Endothelial cell of umbilical vein (primary cell): ENCODE measurements at regions of chr17 and their contacts with region 1.

Region 1: DNA sequence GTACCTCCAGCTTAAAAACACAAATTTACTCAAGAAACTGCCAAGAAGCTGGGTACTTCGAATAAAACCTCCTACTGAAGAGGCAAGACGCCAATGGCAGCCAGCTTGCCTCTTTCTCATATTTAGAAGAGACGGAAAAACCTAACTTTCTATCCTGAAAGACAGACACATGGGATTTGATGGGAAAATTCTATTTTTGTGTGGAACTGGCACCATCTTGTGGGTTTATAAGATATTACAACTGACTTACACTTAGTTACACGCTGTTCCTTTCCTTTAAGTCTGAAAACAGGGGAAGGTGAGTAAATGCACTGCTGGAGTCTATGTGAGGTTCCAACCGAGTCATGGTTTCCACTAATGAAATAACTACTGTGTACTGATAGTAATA is 10.3 kb downstream of the ZNF18 start:
- DNase-seq: peak; percentile 72
- H3K4me3 ChIP-seq: no peak overlapping the region
- H3K27ac ChIP-seq: no peak overlapping the region
- H3K4me1 ChIP-seq: no peaks in the 10 kb centered on the region
- H3K27me3 ChIP-seq: no peaks in the 10 kb centered on the region
- CTCF ChIP-seq: peak; percentile 30 to 35
- POLR2A ChIP-seq: no peak

Region 2: GRCh38 chr17:10729334-10730193 is 1257.4 kb before region 1 on chr17 and contains the start of gene TMEM220:
- CTCF ChIA-PET with region 1: no interaction called
- POLR2A ChIA-PET with region 1: no interaction called
- dilution Hi-C with region 1: no loop called
- intact Hi-C with region 1: loop called (anchors 10 kb)
- DNase-seq: peak; percentile 80
- H3K4me3 ChIP-seq: peak within 1 kb of the TSS; percentile 63 to 74 (median 68)
- H3K27ac ChIP-seq: peak within 1 kb of the TSS; percentile 59
- H3K4me1 ChIP-seq: peaks cover 6% of the 10 kb centered on the region
- H3K27me3 ChIP-seq: peaks cover 0 to 1% of the 10 kb centered on the region in 2 experiments
- CTCF ChIP-seq: no peak
- POLR2A ChIP-seq: no peak
- total RNA-seq, gene TMEM220: 10.4 and 11.2 TPM in 2 replicates

Region 3: GRCh38 chr17:10737168-10737622 is 1249.7 kb before region 1 on chr17:
- CTCF ChIA-PET with region 1: interaction called, 13 read pairs
- POLR2A ChIA-PET with region 1: no interaction called
- dilution Hi-C with region 1: no loop called
- intact Hi-C with region 1: loop called (anchors 10 kb)
- DNase-seq: peak; percentile 45
- H3K4me3 ChIP-seq: no peak overlapping the region
- H3K27ac ChIP-seq: no peak overlapping the region
- H3K4me1 ChIP-seq: no peaks in the 10 kb centered on the region
- H3K27me3 ChIP-seq: peaks cover 0 to 3% of the 10 kb centered on the region in 2 experiments
- CTCF ChIP-seq: peak; percentile 69 to 77
- POLR2A ChIP-seq: no peak

Region 4: GRCh38 chr17:10875979-10876555 is 1110.9 kb before region 1 on chr17:
- CTCF ChIA-PET with region 1: interaction called, 78 read pairs
- POLR2A ChIA-PET with region 1: no interaction called
- dilution Hi-C with region 1: no loop called
- intact Hi-C with region 1: loop called (anchors 1 kb)
- DNase-seq: peak; percentile 23
- H3K4me3 ChIP-seq: no peak overlapping the region
- H3K27ac ChIP-seq: no peak overlapping the region
- H3K4me1 ChIP-seq: no peaks in the 10 kb centered on the region
- H3K27me3 ChIP-seq: no peaks in the 10 kb centered on the region
- CTCF ChIP-seq: peak; percentile 25 to 65
- POLR2A ChIP-seq: no peak

Region 5: DNA sequence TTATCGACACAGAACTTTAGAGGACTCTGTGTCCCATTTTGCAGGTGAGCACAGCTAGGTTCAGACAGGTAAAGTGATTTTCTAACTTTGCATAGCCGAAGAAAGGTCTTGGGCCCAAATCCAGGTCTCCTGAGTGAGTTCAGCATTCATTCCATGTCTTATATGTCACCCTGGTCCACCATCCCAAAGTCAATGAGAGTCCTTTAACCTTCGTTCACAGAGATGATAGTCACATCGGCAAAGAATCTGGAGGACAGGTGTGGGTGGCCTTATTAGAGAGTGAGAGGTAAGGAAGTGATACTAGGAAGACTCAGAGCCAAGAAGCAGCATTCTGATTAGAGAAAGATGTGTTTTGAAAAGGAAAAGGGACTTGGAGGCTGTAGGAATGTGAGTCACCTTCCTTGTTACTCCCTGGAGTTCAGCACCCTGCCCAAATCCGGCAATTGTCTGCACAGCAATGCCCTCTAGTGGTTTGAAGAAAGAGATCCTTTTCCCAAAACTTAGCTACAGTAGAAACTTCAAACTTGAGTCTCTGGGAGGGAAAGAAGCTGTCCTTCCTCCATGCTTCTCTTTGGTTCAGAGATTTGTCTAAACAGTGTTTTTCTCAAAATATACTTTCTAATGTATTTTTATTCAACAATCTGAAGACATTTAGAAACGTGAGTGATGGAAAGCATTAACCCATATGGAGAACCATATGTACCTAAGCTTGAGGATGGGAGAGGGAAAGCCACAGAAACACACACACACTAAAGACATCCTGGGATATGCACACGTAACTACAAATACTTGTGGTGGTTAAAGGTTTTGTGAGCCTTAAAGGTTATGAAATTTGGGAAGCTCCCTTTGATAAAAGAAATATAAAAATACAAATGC is 842.3 kb before region 1 on chr17:
- CTCF ChIA-PET with region 1: no interaction called
- POLR2A ChIA-PET with region 1: no interaction called
- dilution Hi-C with region 1: no loop called
- intact Hi-C with region 1: loop called (anchors 10 kb)
- DNase-seq: no peak
- H3K4me3 ChIP-seq: no peak overlapping the region
- H3K27ac ChIP-seq: no peak overlapping the region
- H3K4me1 ChIP-seq: no peaks in the 10 kb centered on the region
- H3K27me3 ChIP-seq: no peaks in the 10 kb centered on the region
- CTCF ChIP-seq: peak; percentile 8 to 28
- POLR2A ChIP-seq: no peak

Region 6: GRCh38 chr17:11997147-11997846 is 10.4 kb after region 1 on chr17 and contains the start of gene ZNF18:
- CTCF ChIA-PET with region 1: interaction called, 22 read pairs
- POLR2A ChIA-PET with region 1: interaction called, 3 read pairs
- dilution Hi-C with region 1: no loop called
- intact Hi-C with region 1: no loop called
- DNase-seq: peak; percentile 94
- H3K4me3 ChIP-seq: peak within 1 kb of the TSS; percentile 91 to 95 (median 92)
- H3K27ac ChIP-seq: peak within 1 kb of the TSS; percentile 54
- H3K4me1 ChIP-seq: peaks cover 3% of the 10 kb centered on the region
- H3K27me3 ChIP-seq: peaks cover 0 to 2% of the 10 kb centered on the region in 2 experiments
- CTCF ChIP-seq: no peak
- POLR2A ChIP-seq: peak; percentile 99
- total RNA-seq, gene ZNF18: 4.2 and 5.8 TPM in 2 replicates

Region 7: DNA sequence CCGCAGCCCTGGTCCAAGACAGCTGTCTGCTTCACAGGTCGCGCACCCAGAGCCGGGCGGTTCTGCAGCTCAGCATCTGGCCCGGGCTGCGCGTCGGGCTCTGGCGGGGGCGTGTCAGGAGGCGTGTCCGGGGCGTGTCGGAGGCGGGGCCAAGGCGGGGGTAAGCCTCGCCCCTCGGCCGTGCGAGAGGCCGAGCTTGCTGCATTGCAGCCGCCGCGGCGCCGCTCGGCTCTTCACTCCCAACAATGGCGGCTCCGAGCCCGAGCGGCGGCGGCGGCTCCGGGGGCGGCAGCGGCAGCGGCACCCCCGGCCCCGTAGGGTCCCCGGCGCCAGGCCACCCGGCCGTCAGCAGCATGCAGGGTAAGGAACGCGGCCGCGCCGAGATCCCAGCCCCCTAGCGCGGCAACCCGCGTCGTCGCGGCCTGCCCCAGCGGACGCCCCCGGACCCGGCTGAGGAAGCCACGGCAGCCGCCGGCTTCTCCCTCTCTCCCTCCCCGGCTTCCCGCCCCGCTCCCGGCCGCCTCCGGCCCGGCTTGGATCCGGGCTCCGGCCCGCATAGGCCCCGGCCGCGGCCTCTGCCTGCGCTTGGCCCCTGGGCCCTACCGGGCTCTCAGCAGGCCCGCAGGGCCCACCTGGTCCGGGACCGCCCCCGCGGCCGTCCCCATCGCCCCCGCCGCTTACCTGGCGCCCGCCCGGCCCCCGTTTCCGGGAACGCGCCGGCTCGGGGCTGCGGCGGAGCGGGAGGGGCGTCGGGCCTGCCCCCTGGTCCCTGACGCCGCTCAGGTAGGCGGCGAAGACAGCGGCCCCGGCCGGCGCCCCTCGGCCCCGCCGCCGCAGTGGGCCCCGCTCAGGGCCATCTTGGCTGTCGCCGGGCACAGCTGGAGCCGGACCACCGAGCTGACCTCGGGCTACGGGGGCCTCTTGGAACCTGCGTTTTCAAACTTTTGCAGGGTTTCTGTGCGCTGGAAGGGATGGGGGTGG is 34.0 kb after region 1 on chr17 and contains the start of gene MAP2K4:
- CTCF ChIA-PET with region 1: interaction called, 6 read pairs
- POLR2A ChIA-PET with region 1: interaction called, 11 read pairs
- dilution Hi-C with region 1: no loop called
- intact Hi-C with region 1: no loop called
- DNase-seq: peak; percentile 91
- H3K4me3 ChIP-seq: peak within 1 kb of the TSS; percentile 78 to 88 (median 88)
- H3K27ac ChIP-seq: peak within 1 kb of the TSS; percentile 66
- H3K4me1 ChIP-seq: peaks cover 11% of the 10 kb centered on the region
- H3K27me3 ChIP-seq: peaks cover 3 to 5% of the 10 kb centered on the region in 2 experiments
- CTCF ChIP-seq: no peak
- POLR2A ChIP-seq: peak; percentile 84
- total RNA-seq, gene MAP2K4: 17.5 and 21.0 TPM in 2 replicates

Region 8: DNA sequence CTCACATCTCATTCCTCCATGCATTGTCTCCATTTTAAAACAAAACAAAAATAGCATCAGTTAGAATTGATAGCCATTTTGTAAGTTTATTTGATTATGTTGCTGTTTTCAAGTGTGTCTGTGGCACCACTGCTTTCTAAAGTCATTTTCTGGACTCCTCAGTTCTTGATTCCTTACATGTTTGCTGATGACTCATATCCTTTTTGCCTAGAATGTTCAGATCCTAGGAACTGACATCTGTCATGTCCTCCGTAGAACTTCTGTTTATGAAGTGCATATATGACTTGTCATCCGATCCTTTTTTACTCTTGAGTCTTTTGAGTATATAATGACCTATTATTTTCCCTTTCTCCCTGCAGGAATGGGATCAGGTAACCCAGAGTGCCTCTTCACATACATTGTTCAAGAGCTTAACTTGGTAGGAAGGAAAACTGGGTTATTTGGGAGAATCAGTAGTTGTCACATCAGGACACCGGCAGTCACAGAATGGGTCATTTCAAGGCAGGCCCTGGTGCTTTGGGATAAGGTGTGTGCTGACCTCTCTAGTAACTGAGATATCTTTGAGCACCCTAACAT is 103.0 kb after region 1 on chr17:
- CTCF ChIA-PET with region 1: no interaction called
- POLR2A ChIA-PET with region 1: no interaction called
- dilution Hi-C with region 1: no loop called
- intact Hi-C with region 1: no loop called
- DNase-seq: peak; percentile 79
- H3K4me3 ChIP-seq: peak overlapping the region in 1 of 3 experiments; percentile 7
- H3K27ac ChIP-seq: peak overlapping the region; percentile 68
- H3K4me1 ChIP-seq: peaks cover 16% of the 10 kb centered on the region
- H3K27me3 ChIP-seq: no peaks in the 10 kb centered on the region
- CTCF ChIP-seq: no peak
- POLR2A ChIP-seq: no peak